ENCODE measurements at regions of chr9 and their contacts with region 1.

Region 1: GRCh38 chr9:95462249-95463147 is 54.3 kb downstream of the PTCH1 start:
- DNase-seq: peak; percentile 48 to 92 (median 81)
- ATAC-seq: peak; percentile 96 to 97
- H3K4me3 Mint-ChIP-seq: peak overlapping the region; percentile 71 to 90 (median 87)
- H3K27ac Mint-ChIP-seq: peak overlapping the region; percentile 24 to 92 (median 74)
- H3K4me1 Mint-ChIP-seq: peaks cover 21 to 44% (median 40%) of the 10 kb centered on the region in 4 donors
- H3K27me3 Mint-ChIP-seq: peaks cover 0 to 6% (median 0%) of the 10 kb centered on the region in 5 donors

Region 2: DNA sequence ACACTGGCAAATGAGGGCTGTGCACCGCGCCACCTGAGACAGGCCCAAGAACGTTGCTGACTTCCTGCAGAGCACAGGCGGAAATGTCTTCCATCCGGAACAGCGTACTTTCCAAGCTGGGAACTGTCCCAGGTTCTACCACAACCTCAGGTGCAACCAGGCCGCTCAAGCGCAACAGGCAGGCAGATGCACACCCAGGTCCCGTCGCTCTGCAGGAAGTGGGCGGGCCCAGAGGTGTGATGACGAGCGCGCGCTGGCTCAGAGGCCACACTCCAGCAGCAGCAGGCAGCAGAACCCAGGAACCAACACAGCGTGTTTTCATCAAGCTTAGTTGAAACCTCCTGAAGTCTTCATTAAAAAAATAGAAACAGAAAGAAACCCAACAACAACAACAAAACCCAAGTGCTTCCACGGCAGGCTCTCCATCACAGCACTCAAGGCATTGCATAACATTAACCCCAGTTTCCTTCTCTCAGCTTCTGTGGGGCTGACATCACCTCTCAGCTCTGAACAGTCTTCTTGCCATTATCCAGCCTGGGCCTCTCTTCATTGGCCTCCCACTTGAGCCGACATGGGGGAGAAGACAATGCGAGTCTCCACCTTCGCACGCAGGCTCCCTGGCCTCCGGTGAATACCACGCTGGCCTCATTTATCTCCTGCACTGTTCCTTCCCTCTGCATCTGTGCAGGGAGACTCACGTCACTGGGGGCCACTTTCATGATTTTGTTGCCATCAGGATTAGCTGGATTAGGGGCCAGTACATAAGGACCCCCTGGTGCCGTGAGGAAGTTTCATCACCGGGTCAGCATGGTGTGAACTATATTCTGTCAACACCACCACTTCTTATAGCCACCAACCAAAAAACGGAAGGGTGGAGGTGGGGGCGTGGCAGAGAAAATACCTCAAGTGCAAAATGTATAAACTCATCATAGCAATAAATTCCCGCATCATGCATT is 32.2 kb after region 1 on chr9:
- POLR2A ChIA-PET with region 1: interaction called, 11 read pairs
- DNase-seq: peak; percentile 73 to 93 (median 88)
- ATAC-seq: peak; percentile 94
- H3K4me3 Mint-ChIP-seq: peak overlapping the region; percentile 76 to 97 (median 91)
- H3K27ac Mint-ChIP-seq: peak overlapping the region; percentile 89 to 99 (median 98)
- H3K4me1 Mint-ChIP-seq: peaks cover 32 to 85% (median 82%) of the 10 kb centered on the region in 4 donors
- H3K27me3 Mint-ChIP-seq: peaks cover 0 to 12% (median 0%) of the 10 kb centered on the region in 5 donors

Measured in naive thymus-derived CD8-positive, alpha-beta T cell (primary cell).